Aorta (tissue), 5 donors: ENCODE measurements at regions of chr3 and their contacts with region 1.

Region 1: GRCh38 chr3:109731620-109732473 is 394.5 kb upstream of the DPPA4 start:
- DNase-seq: no peak
- ATAC-seq: peak; percentile 78
- H3K4me3 ChIP-seq: no peak overlapping the region
- H3K27ac ChIP-seq: no peak overlapping the region
- H3K4me1 ChIP-seq: no peaks in the 10 kb centered on the region
- H3K27me3 ChIP-seq: no peaks in the 10 kb centered on the region

Region 2: GRCh38 chr3:110314512-110315114 is 582.8 kb after region 1 on chr3:
- intact Hi-C with region 1: loop called in 1 of 2 experiments (anchors 10 kb)
- DNase-seq: peak in 1 of 2 donors; percentile 44
- ATAC-seq: no peak
- H3K4me3 ChIP-seq: no peak overlapping the region
- H3K27ac ChIP-seq: no peak overlapping the region
- H3K4me1 ChIP-seq: no peaks in the 10 kb centered on the region
- H3K27me3 ChIP-seq: no peaks in the 10 kb centered on the region

Region 3: DNA sequence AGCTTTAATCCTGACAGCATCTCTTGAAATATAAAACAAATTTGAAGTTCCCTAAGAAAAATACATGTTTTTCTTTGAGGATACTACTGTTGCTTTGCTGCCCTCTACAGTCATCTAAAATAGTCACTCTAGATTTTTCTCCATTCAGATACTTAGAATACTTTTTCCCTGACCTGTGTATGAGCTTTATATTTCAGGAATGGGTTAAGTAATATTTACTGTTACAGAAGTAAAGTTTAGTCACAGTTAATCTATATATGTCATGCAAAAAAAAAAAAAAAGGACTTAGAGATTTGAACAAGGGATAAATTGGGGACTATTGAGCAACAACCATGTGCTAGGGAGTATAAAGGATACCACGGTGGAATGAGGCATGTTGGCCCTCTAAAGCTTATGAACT is 1348.6 kb after region 1 on chr3:
- intact Hi-C with region 1: loop called in 1 of 2 experiments (anchors 10 kb)
- DNase-seq: no peak
- ATAC-seq: no peak
- H3K4me3 ChIP-seq: no peak overlapping the region
- H3K27ac ChIP-seq: no peak overlapping the region
- H3K4me1 ChIP-seq: peaks cover 0 to 5% of the 10 kb centered on the region in 2 donors
- H3K27me3 ChIP-seq: no peaks in the 10 kb centered on the region